Activated T-helper 2 cell treated with anti-CD3 and anti-CD28 coated beads, Interferon-gamma antibody, Interleukin-2, Interleukin-4, amounts not matched to agents 10 μg/mL and 5 μg/mL and 100 μg/mL, durations not matched to agents 14 hours and 24 hours and 36 hours (primary cell): ENCODE measurements at regions of chr1 and their contacts with region 1.

Region 1: DNA sequence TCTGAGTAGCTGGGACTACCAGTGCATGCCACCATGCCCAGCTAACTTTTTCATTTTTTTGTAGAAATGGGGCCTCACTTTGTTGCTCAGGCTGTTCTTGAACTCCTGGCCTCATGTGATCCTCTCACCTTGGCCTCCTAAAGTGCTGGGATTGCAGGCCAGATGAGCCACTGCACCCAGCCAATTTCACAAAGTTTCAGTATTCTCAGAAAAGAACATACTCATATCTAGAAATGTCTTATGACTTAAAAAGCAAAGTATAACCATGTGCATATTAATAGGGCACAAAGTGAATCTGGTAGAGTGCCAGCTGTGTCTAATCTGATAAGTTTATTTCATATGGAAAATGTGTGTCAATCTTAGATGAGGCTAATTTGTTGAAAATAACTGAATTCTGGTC is 87.5 kb upstream of the CACYBP start:
- DNase-seq: no peak
- H3K4me3 Mint-ChIP-seq: no peak overlapping the region
- H3K27ac Mint-ChIP-seq: peak overlapping the region; percentile 28
- H3K4me1 Mint-ChIP-seq: peaks cover 46% of the 10 kb centered on the region
- H3K27me3 Mint-ChIP-seq: no peaks in the 10 kb centered on the region

Region 2: DNA sequence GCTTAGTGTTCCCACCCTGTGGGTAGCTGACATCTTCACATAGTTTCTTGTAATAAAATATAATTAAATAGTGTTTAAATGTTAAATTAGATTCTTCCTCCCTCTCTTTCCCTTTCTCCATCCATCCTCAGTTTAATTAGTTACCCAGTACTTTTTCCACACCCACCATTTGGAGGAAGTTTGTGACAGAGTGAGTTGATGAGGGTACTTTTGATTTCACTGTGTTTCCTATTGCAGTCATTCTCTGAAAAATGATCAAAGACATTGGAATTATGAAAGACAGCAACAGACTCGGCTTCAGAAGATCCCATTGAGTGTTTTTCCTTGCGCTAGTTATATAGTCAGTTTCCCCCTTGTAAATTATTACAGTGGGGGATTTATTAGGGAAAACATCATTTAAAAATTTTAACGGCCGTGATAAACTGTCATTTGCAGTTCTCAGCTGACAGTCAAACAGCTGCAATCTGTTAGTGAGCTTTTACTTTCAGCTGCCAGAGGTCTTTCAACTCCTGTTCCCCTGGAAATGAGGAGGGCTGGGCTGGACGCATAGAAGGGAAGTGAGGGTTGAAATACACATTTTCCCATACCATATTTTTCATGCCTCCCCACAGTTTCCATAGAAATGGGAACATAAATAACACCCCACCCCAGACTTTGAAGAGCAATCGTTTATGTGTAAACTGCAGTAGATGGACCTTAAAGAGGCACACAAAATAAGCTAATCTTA is 26.2 kb after region 1 on chr1:
- intact Hi-C with region 1: loop called (anchors 2 kb)
- DNase-seq: no peak
- H3K4me3 Mint-ChIP-seq: peak overlapping the region; percentile 53
- H3K27ac Mint-ChIP-seq: no peak overlapping the region
- H3K4me1 Mint-ChIP-seq: peaks cover 9% of the 10 kb centered on the region
- H3K27me3 Mint-ChIP-seq: no peaks in the 10 kb centered on the region

Region 3: GRCh38 chr1:175449306-175449705 is 537.0 kb after region 1 on chr1:
- intact Hi-C with region 1: no loop called
- DNase-seq: no peak
- H3K4me3 Mint-ChIP-seq: no peak overlapping the region
- H3K27ac Mint-ChIP-seq: no peak overlapping the region
- H3K4me1 Mint-ChIP-seq: no peaks in the 10 kb centered on the region
- H3K27me3 Mint-ChIP-seq: no peaks in the 10 kb centered on the region